CD8-positive, alpha-beta memory T cell (primary cell): ENCODE measurements at regions of chr7 and their contacts with region 1.

Region 1: GRCh38 chr7:87219545-87220025 is at the start of gene TMEM243:
- DNase-seq: peak; percentile 79 to 91 (median 86)
- H3K4me3 ChIP-seq: peak within 1 kb of the TSS; percentile 87
- H3K4me3 Mint-ChIP-seq: peak within 1 kb of the TSS; percentile 97 to 99 (median 98)
- H3K27ac ChIP-seq: peak within 1 kb of the TSS; percentile 91
- H3K27ac Mint-ChIP-seq: peak within 1 kb of the TSS; percentile 97 to 99 (median 98)
- H3K4me1 ChIP-seq: peaks cover 39% of the 10 kb centered on the region
- H3K4me1 Mint-ChIP-seq: peaks cover 38 to 48% (median 47%) of the 10 kb centered on the region in 3 donors
- H3K27me3 ChIP-seq: no peaks in the 10 kb centered on the region
- H3K27me3 Mint-ChIP-seq: peaks cover 0 to 3% of the 10 kb centered on the region in 2 donors
- total RNA-seq, gene TMEM243: 62.9 to 73.3 TPM

Region 2: GRCh38 chr7:87231256-87231655 is 11.7 kb after region 1 on chr7:
- CTCF ChIA-PET with region 1: interaction called, 10 read pairs
- POLR2A ChIA-PET with region 1: no interaction called
- DNase-seq: no peak
- H3K4me3 ChIP-seq: no peak overlapping the region
- H3K4me3 Mint-ChIP-seq: no peak overlapping the region
- H3K27ac ChIP-seq: no peak overlapping the region
- H3K27ac Mint-ChIP-seq: no peak overlapping the region
- H3K4me1 ChIP-seq: no peaks in the 10 kb centered on the region
- H3K4me1 Mint-ChIP-seq: peaks cover 0 to 4% (median 0%) of the 10 kb centered on the region in 3 donors
- H3K27me3 ChIP-seq: no peaks in the 10 kb centered on the region
- H3K27me3 Mint-ChIP-seq: peaks cover 8 to 10% of the 10 kb centered on the region in 2 donors

Region 3: GRCh38 chr7:87252166-87252565 is 32.6 kb after region 1 on chr7:
- CTCF ChIA-PET with region 1: no interaction called
- POLR2A ChIA-PET with region 1: no interaction called
- DNase-seq: no peak
- H3K4me3 ChIP-seq: no peak overlapping the region
- H3K4me3 Mint-ChIP-seq: no peak overlapping the region
- H3K27ac ChIP-seq: no peak overlapping the region
- H3K27ac Mint-ChIP-seq: peak overlapping the region in 1 of 8 donors; percentile 11
- H3K4me1 ChIP-seq: no peaks in the 10 kb centered on the region
- H3K4me1 Mint-ChIP-seq: no peaks in the 10 kb centered on the region
- H3K27me3 ChIP-seq: no peaks in the 10 kb centered on the region
- H3K27me3 Mint-ChIP-seq: peaks cover 9 to 37% of the 10 kb centered on the region in 2 donors

Region 4: GRCh38 chr7:87635921-87636320 is 416.3 kb after region 1 on chr7:
- CTCF ChIA-PET with region 1: no interaction called
- POLR2A ChIA-PET with region 1: no interaction called
- DNase-seq: no peak
- H3K4me3 ChIP-seq: no peak overlapping the region
- H3K4me3 Mint-ChIP-seq: no peak overlapping the region
- H3K27ac ChIP-seq: no peak overlapping the region
- H3K27ac Mint-ChIP-seq: no peak overlapping the region
- H3K4me1 ChIP-seq: no peaks in the 10 kb centered on the region
- H3K4me1 Mint-ChIP-seq: no peaks in the 10 kb centered on the region
- H3K27me3 ChIP-seq: no peaks in the 10 kb centered on the region
- H3K27me3 Mint-ChIP-seq: peaks cover 0 to 12% of the 10 kb centered on the region in 2 donors